ENCODE measurements at regions of chr21 and their contacts with region 1.

Region 1: DNA sequence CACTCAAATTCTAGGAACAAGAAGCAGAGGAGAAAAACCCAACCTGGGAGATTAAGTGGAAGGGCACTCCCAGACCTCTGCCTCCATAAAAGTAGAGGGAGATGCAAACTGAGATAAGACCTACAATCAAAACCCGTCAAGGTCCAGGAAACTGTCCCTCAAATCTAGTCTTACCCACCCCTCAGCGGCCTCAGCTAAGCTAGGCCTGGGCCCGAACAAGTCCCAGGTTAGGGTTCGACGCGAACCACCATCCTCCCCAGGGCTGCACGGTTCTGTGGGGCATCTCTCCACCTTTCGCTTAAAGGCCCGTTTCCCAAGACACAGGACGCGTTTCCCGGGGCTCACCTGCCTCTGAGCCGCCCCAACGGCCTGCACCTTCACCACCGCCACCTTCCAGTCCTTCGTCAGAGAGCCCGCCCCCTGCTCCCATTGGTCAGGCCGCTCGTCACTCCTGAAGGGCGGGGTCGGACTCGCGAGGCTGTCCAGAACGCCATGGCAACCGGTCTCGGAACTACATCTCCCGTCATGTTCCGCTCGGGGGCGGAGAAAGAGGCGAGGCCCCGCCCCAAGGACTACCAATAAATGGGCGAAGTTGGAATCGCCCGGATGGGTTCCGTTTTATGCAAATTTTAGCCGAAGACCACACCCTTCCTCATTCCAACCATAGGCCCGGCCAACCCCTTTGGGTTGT is at the start of gene CRYZL1:
- DNase-seq: peak; percentile 100
- ATAC-seq: peak; percentile 83
- H3K4me3 Mint-ChIP-seq: peak within 1 kb of the TSS; percentile 82
- H3K27ac Mint-ChIP-seq: peak within 1 kb of the TSS; percentile 96
- H3K4me1 Mint-ChIP-seq: peaks cover 33% of the 10 kb centered on the region
- H3K27me3 Mint-ChIP-seq: peaks cover 10% of the 10 kb centered on the region
- total RNA-seq, gene CRYZL1: 31.4 to 35.2 TPM

Region 2: DNA sequence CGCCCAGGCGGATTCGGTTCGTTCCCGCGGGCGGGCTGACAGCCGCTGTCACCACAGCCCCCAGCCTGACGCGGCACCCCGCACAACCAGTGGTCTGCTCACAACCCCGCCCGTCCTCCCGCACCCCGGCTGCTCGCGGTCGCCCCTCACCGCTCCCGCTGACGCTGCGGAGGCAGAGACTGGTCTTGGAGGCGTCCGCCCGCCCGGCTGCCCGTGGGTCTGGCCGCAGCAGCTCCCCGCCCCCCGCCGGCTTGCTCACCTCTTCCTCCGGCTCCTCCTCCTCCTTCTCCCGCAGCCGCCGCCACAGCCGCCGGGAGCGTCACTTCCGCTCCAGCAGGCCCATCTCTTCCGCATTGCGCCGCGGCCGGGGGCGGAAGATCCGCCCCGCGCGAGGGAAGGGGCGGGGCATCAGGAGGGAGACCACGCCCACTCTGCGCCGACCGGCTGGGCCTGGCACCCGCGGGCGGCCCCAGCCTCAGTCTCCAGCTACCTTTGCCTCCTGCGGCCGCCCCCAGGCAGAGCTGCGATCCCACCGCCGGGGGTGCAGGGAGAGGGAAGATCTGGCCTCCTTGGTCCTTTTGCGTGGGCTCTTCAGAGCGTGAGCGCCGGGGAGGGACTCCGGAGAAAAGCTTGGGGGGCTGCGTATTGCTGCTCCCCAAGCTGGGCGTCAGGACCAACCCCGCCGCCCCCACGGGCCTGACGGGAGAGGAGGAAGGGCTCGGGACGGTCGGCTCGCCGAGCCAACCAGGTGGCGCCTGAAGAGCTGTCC is 913.6 kb before region 1 on chr21 and contains the start of gene SYNJ1:
- CTCF ChIA-PET with region 1: no interaction called
- POLR2A ChIA-PET with region 1: no interaction called
- intact Hi-C with region 1: loop called in 1 of 2 experiments (anchors 5 kb)
- DNase-seq: peak; percentile 97
- ATAC-seq: peak; percentile 91
- H3K4me3 Mint-ChIP-seq: peak within 1 kb of the TSS; percentile 93
- H3K27ac Mint-ChIP-seq: peak within 1 kb of the TSS; percentile 91
- H3K4me1 Mint-ChIP-seq: peaks cover 54% of the 10 kb centered on the region
- H3K27me3 Mint-ChIP-seq: no peaks in the 10 kb centered on the region
- total RNA-seq, gene SYNJ1: 6.3 to 10.5 TPM

Region 3: GRCh38 chr21:33324291-33325221 is 316.9 kb before region 1 on chr21 and contains the start of gene IFNAR1:
- CTCF ChIA-PET with region 1: no interaction called
- POLR2A ChIA-PET with region 1: no interaction called
- intact Hi-C with region 1: loop called in 1 of 2 experiments (anchors 1 kb)
- DNase-seq: peak; percentile 100
- ATAC-seq: peak; percentile 95
- H3K4me3 Mint-ChIP-seq: no peak within 1 kb of the TSS
- H3K27ac Mint-ChIP-seq: no peak within 1 kb of the TSS
- H3K4me1 Mint-ChIP-seq: peaks cover 31% of the 10 kb centered on the region
- H3K27me3 Mint-ChIP-seq: no peaks in the 10 kb centered on the region
- total RNA-seq, gene IFNAR1: 21.8 to 29.6 TPM

Region 4: GRCh38 chr21:33542640-33543504 is 98.6 kb before region 1 on chr21 and contains the start of gene SON:
- CTCF ChIA-PET with region 1: no interaction called
- POLR2A ChIA-PET with region 1: no interaction called
- intact Hi-C with region 1: loop called (anchors 1 kb)
- DNase-seq: peak; percentile 99
- ATAC-seq: peak; percentile 94
- H3K4me3 Mint-ChIP-seq: peak within 1 kb of the TSS; percentile 85
- H3K27ac Mint-ChIP-seq: peak within 1 kb of the TSS; percentile 98
- H3K4me1 Mint-ChIP-seq: peaks cover 29% of the 10 kb centered on the region
- H3K27me3 Mint-ChIP-seq: no peaks in the 10 kb centered on the region
- total RNA-seq, gene SON: 299 to 380 TPM

Region 5: GRCh38 chr21:33619726-33620125 is 21.8 kb before region 1 on chr21:
- CTCF ChIA-PET with region 1: no interaction called
- POLR2A ChIA-PET with region 1: no interaction called
- intact Hi-C with region 1: no loop called
- DNase-seq: no peak
- ATAC-seq: no peak
- H3K4me3 Mint-ChIP-seq: no peak overlapping the region
- H3K27ac Mint-ChIP-seq: no peak overlapping the region
- H3K4me1 Mint-ChIP-seq: no peaks in the 10 kb centered on the region
- H3K27me3 Mint-ChIP-seq: no peaks in the 10 kb centered on the region

Region 6: DNA sequence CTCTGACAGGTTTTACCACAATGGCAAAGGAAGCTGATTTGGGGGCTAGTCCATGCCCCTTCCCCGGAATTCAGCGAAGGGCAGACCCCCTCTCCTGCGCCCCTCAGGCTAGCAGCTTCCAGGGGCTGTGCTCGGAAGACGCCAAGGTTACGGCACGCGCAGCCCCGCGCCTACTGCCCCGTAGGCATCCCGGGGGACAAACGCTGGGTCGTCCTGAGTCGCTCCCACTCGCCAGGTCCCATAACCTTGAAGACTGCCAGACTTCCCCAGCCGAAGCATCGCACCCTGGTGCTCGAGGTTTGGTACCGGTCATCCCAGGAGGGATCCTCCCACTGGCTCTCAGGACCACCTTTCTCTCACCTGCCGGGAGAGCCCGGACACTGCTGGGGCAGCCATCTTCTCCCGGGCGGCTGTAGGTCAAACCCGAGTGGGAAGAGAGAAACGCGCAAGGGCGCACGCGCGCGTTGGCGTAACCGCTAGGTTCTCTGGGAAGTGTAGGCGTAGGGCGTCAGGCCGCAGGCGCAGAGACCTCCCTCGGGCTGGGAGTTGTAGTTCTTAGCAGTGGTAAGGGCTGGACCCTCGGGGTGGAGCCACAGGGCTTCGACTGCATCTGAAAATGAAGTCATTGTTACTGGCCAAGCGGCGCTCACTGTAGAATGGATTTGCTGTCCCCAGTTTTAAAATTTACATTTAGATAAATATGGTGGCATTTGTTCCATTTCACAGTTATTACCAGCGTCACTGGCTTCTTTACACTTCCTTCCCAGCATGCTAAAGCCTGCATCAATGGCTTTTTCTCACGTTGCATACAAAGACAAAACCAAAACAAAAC is 274.1 kb after region 1 on chr21 and contains the start of gene ATP5PO:
- CTCF ChIA-PET with region 1: no interaction called
- POLR2A ChIA-PET with region 1: no interaction called
- intact Hi-C with region 1: loop called (anchors 1 kb)
- DNase-seq: peak; percentile 98
- ATAC-seq: peak; percentile 99
- H3K4me3 Mint-ChIP-seq: peak within 1 kb of the TSS; percentile 89
- H3K27ac Mint-ChIP-seq: peak within 1 kb of the TSS; percentile 97
- H3K4me1 Mint-ChIP-seq: peaks cover 27% of the 10 kb centered on the region
- H3K27me3 Mint-ChIP-seq: no peaks in the 10 kb centered on the region
- total RNA-seq, gene ATP5PO: 177 to 238 TPM

Region 7: DNA sequence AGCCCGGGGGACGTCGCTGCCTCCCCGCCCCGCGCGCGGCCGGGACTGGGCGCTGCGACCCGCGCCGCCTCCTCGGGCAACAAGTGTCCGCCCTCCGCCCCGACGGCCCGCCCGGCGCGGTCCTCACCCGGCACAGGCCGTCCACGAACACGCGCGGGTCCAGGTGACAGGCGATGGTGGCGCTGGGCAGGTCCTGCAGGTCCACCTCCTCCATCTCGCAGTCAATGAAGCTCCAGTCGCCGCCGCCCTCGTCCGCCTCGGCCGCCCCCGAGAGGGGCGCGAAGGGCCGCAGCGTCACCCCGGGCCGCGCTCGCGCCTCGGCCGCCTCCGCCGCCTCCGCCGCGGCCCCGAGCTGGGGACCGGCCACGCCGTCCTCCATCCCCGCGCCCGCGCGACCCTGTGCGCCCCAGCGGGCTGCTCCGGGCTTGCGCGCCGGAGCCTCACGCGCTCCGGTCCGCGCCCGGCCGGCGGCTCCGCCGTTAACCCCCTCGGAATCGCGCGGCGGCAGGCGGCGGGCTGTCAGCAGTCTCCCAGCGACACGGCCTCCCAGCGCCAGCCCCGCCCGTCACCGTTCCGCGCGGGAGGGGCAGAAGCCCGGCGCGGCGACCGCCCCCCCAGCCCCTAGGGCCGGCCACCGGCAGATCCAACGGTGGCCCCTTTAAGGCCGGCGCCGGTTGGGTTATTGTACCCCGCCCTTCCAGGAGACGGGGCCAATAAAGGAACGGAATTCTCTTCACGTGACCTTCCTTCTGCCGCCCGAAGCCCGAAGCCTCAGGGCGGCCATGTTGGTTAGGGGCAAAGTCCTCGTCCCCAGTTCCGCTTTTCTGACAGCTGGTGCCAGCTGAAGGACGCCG is 973.4 kb after region 1 on chr21 and contains the start of gene RCAN1:
- CTCF ChIA-PET with region 1: no interaction called
- POLR2A ChIA-PET with region 1: no interaction called
- intact Hi-C with region 1: loop called (anchors 1 to 2 kb)
- DNase-seq: peak; percentile 92
- ATAC-seq: peak; percentile 98
- H3K4me3 Mint-ChIP-seq: peak within 1 kb of the TSS; percentile 75
- H3K27ac Mint-ChIP-seq: peak within 1 kb of the TSS; percentile 68
- H3K4me1 Mint-ChIP-seq: peaks cover 18% of the 10 kb centered on the region
- H3K27me3 Mint-ChIP-seq: no peaks in the 10 kb centered on the region
- total RNA-seq, gene RCAN1: 9.9 to 10.0 TPM